ENCODE measurements at regions of chr20 and their contacts with region 1.

Region 1: GRCh38 chr20:50929299-50930138 is 1.7 kb downstream of the ADNP start:
- DNase-seq: peak; percentile 81 to 88 (median 83)
- H3K4me3 ChIP-seq: peak overlapping the region; percentile 92
- H3K27ac ChIP-seq: peak overlapping the region in 1 of 2 donors; percentile 83
- H3K4me1 ChIP-seq: peaks cover 14% of the 10 kb centered on the region
- H3K27me3 ChIP-seq: no peaks in the 10 kb centered on the region
- CTCF ChIP-seq: peak; percentile 50 to 81 (median 69)
- EP300 ChIP-seq: no peak
- POLR2A ChIP-seq: no peak

Region 2: GRCh38 chr20:50790651-50791277 is 138.8 kb before region 1 on chr20:
- intact Hi-C with region 1: loop called (anchors 2 to 10 kb)
- DNase-seq: peak; percentile 91 to 95 (median 92)
- H3K4me3 ChIP-seq: no peak overlapping the region
- H3K27ac ChIP-seq: peak overlapping the region; percentile 78 to 88
- H3K4me1 ChIP-seq: peaks cover 4% of the 10 kb centered on the region
- H3K27me3 ChIP-seq: no peaks in the 10 kb centered on the region
- CTCF ChIP-seq: peak; percentile 78 to 86 (median 85)
- EP300 ChIP-seq: no peak
- POLR2A ChIP-seq: no peak

Region 3: GRCh38 chr20:50859161-50859560 is 70.4 kb before region 1 on chr20:
- intact Hi-C with region 1: no loop called
- DNase-seq: no peak
- H3K4me3 ChIP-seq: no peak overlapping the region
- H3K27ac ChIP-seq: no peak overlapping the region
- H3K4me1 ChIP-seq: no peaks in the 10 kb centered on the region
- H3K27me3 ChIP-seq: no peaks in the 10 kb centered on the region
- CTCF ChIP-seq: no peak
- EP300 ChIP-seq: no peak
- POLR2A ChIP-seq: no peak

Region 4: DNA sequence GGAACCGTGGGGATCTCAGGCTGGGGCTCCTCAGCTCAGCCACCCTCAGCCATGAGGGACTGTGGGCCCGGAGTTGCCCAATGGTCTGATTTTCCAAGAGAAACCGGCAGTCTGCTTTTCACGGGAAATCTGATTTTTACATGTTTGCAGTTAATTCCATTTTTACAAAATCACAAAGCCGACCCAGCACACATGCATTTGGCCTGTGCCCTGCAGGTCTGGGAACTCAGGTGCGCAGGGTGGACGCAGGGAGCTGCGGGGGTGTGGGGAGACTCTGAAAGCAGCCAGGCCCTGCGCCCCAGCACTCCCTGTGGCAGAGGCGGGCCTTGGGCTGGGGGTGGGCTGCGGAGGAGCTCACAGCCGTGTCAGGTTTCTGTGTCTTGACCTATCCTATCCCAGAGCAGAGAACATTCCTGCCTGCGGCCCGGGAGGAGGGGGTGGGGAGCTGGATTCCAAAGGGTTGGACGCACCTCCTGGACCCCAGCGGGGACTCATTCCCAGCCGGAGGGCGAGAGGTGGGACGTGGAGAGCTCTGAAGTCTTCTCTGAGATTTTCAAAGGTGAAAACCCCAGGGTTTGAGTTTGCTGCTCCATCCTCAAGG is 58.9 kb before region 1 on chr20:
- intact Hi-C with region 1: loop called in 1 of 4 experiments (anchors 10 kb)
- DNase-seq: peak; percentile 22 to 79 (median 55)
- H3K4me3 ChIP-seq: no peak overlapping the region
- H3K27ac ChIP-seq: peak overlapping the region in 1 of 2 donors; percentile 48
- H3K4me1 ChIP-seq: peaks cover 6% of the 10 kb centered on the region
- H3K27me3 ChIP-seq: no peaks in the 10 kb centered on the region
- CTCF ChIP-seq: no peak
- EP300 ChIP-seq: no peak
- POLR2A ChIP-seq: no peak

Measured in ovary (tissue), 10 donors.